ENCODE measurements at regions of chr7 and their contacts with region 1.

Region 1: DNA sequence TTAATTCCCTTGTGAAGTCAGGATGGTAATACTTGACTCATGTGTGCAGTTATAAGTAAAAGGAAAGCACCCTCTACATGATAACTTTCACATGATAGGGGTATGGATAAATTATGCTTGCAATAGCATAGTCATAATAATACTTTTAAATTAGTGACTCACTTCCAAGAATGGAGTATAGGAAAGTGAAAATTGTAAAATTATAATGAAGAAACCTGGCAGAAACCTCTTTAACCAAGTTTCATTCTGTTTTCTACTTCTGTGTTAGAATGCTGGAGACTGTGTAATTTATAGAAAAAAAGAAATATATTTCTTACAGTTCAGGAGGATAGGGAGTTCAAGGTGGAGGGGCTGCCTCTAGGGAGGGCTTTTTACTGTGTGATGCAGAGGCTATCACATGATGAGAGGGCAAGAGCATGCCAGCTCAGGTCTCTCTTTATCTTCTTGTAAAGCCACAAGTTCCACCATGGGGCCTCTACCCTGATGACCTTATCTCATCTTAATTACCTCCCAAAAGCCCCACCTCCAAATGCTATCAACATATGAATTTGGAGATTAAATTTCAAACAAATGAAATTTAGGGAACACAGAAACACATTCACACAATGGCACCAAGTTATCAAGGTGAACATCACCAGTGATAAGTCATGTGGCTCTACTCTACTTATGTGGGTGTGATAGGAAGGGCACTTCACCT is 43.2 kb downstream of the HDAC9 start:
- DNase-seq: no peak
- H3K4me3 ChIP-seq: no peak overlapping the region
- H3K27ac ChIP-seq: no peak overlapping the region
- H3K4me1 ChIP-seq: peaks cover 62% of the 10 kb centered on the region
- CTCF ChIP-seq: no peak

Region 2: DNA sequence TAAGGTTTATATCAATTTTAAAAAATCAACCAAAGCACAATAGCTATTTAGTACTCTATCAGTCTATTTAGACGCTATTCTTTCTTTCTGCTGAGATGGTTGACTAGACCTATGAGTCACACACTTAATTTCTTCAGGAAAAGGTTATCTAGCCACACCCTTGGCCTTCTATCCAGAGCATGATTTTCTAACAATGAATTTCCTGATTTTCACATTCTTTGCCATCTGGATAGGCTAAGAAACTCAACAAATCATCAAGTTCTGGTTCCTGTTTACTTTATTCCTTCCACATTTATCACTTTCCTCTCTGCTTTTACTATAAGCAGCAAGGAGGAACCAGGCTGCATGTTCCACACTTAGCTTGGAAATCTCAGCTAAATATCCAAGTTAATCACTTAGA is 519.1 kb before region 1 on chr7:
- CTCF ChIA-PET with region 1: no interaction called
- POLR2A ChIA-PET with region 1: no interaction called
- intact Hi-C with region 1: no loop called
- DNase-seq: no peak
- H3K4me3 ChIP-seq: no peak overlapping the region
- H3K27ac ChIP-seq: no peak overlapping the region
- H3K4me1 ChIP-seq: no peaks in the 10 kb centered on the region
- CTCF ChIP-seq: no peak

Region 3: GRCh38 chr7:18426564-18427226 is 112.0 kb before region 1 on chr7:
- CTCF ChIA-PET with region 1: no interaction called
- POLR2A ChIA-PET with region 1: no interaction called
- intact Hi-C with region 1: no loop called
- DNase-seq: no peak
- H3K4me3 ChIP-seq: no peak overlapping the region
- H3K27ac ChIP-seq: no peak overlapping the region
- H3K4me1 ChIP-seq: peaks cover under 1% of the 10 kb centered on the region
- CTCF ChIP-seq: no peak

Region 4: GRCh38 chr7:18552943-18553584 is 14.4 kb after region 1 on chr7:
- CTCF ChIA-PET with region 1: interaction called, 5 read pairs
- POLR2A ChIA-PET with region 1: interaction called, 17 read pairs
- intact Hi-C with region 1: no loop called
- DNase-seq: peak; percentile 54
- H3K4me3 ChIP-seq: peak overlapping the region; percentile 41
- H3K27ac ChIP-seq: peak overlapping the region; percentile 36
- H3K4me1 ChIP-seq: peaks cover 43% of the 10 kb centered on the region
- CTCF ChIP-seq: no peak

Region 5: GRCh38 chr7:18564779-18565178 is 26.1 kb after region 1 on chr7:
- CTCF ChIA-PET with region 1: no interaction called
- POLR2A ChIA-PET with region 1: interaction called, 28 read pairs
- intact Hi-C with region 1: loop called (anchors 1 kb)
- DNase-seq: no peak
- H3K4me3 ChIP-seq: no peak overlapping the region
- H3K27ac ChIP-seq: no peak overlapping the region
- H3K4me1 ChIP-seq: peaks cover 54% of the 10 kb centered on the region
- CTCF ChIP-seq: no peak

Region 6: GRCh38 chr7:18590744-18591340 is 52.1 kb after region 1 on chr7:
- CTCF ChIA-PET with region 1: no interaction called
- POLR2A ChIA-PET with region 1: interaction called, 10 read pairs
- intact Hi-C with region 1: no loop called
- DNase-seq: peak; percentile 43
- H3K4me3 ChIP-seq: no peak overlapping the region
- H3K27ac ChIP-seq: no peak overlapping the region
- H3K4me1 ChIP-seq: peaks cover 19% of the 10 kb centered on the region
- CTCF ChIP-seq: peak; percentile 82